Cardiac septum (tissue), 1 donor: ENCODE measurements at regions of chr10 and their contacts with region 1.

Region 1: GRCh38 chr10:100912605-100913469 is at the start of gene SLF2:
- DNase-seq: peak; percentile 99
- total RNA-seq, gene SLF2: 22.8 TPM

Region 2: GRCh38 chr10:100945754-100946153 is 32.9 kb after region 1 on chr10:
- intact Hi-C with region 1: no loop called
- DNase-seq: no peak

Region 3: DNA sequence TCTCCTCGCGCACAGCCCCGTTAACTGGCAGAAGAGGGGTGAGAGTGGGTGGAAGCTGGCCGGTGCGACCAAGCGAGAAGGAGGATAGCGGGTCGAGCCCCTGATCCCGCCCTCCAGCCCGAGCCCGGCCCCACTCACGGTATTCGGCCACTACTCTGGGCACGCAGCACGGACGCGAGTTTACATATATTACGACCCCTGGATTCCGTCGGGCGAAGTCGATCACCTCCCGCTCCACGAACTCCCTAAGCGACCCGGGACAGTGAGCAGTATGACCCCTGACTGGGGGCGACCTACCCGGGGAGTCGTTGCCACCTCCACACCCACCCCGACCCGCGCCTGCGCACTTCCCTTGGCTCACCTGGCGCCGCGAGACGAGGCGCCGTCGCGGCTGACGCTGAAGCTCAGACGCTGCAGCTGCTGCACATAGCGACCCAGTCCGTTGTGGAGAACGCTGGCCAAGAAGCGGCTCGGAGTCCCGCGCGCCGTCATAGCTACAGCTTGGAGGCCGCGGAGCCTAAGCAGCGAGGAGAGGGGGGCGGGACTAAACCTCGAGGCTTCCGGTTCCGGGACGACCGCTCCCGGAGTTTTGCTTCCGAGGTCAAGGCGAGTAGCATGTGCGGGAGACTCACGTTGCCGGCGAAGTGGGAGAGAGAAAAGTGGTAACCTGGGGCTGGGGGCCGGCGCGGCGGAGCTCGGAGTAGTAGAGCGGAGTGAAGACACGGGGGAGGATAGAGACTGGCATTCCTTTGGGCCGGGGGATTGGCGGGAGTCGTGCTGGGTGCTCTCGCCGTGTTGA is 74.3 kb after region 1 on chr10 and contains the starts of genes MRPL43 and TWNK:
- intact Hi-C with region 1: loop called (anchors 5 kb)
- DNase-seq: peak; percentile 94
- total RNA-seq, gene MRPL43: 51.7 TPM
- total RNA-seq, gene TWNK: 5.2 TPM